ENCODE measurements at regions of chr14 and their contacts with region 1.

Region 1: DNA sequence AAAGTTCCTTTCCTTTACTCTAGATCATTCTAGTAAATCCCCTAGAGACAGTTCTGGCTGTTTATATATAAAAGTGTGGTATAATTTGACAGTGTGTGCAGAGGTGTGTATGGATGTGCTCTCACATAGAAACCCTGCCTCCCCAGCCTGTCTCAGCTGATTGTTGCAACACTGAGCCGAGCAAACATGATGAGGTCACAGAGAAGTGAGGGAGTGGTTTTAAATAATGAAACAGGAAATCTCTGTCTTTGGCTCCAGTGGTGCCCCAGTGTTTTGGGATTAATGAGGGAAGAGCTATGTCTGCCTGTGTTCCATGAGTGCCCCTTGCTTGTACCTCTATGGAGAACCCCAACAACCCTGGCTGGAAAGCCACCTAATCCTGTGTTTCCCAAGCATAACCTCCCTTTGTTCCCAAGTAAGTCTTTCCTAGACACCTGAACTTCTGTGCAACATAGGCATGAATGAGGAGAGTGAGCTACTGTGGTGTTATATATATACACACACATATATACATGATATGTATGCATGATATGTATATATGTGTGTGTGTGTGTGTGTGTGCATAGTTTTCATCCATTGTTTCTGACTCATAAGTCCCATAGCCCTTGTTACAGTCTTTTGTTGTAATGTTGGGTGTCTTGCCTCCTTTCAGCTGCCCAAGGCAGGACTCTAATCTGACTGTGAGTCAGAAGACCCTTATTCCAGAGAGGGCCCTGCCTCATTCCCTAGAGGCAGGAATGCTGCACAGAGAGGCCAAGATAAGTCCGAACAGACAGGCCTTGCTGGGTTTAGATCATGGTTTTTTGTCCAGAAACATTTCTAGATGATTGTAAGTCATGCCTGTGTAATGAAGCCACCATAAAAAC is 18.0 kb downstream of the TRAF3 start:
- DNase-seq: peak in 1 of 5 donors; percentile 39
- H3K4me3 ChIP-seq: no peak overlapping the region
- H3K27ac ChIP-seq: no peak overlapping the region
- H3K4me1 ChIP-seq: peaks cover 3% of the 10 kb centered on the region
- H3K27me3 ChIP-seq: no peaks in the 10 kb centered on the region
- CTCF ChIP-seq: no peak
- EP300 ChIP-seq: no peak
- POLR2A ChIP-seq: no peak

Region 2: GRCh38 chr14:101917413-101918017 is 877.8 kb before region 1 on chr14:
- intact Hi-C with region 1: no loop called
- DNase-seq: no peak
- H3K4me3 ChIP-seq: no peak overlapping the region
- H3K27ac ChIP-seq: no peak overlapping the region
- H3K4me1 ChIP-seq: no peaks in the 10 kb centered on the region
- H3K27me3 ChIP-seq: no peaks in the 10 kb centered on the region
- CTCF ChIP-seq: no peak
- EP300 ChIP-seq: no peak
- POLR2A ChIP-seq: no peak

Region 3: DNA sequence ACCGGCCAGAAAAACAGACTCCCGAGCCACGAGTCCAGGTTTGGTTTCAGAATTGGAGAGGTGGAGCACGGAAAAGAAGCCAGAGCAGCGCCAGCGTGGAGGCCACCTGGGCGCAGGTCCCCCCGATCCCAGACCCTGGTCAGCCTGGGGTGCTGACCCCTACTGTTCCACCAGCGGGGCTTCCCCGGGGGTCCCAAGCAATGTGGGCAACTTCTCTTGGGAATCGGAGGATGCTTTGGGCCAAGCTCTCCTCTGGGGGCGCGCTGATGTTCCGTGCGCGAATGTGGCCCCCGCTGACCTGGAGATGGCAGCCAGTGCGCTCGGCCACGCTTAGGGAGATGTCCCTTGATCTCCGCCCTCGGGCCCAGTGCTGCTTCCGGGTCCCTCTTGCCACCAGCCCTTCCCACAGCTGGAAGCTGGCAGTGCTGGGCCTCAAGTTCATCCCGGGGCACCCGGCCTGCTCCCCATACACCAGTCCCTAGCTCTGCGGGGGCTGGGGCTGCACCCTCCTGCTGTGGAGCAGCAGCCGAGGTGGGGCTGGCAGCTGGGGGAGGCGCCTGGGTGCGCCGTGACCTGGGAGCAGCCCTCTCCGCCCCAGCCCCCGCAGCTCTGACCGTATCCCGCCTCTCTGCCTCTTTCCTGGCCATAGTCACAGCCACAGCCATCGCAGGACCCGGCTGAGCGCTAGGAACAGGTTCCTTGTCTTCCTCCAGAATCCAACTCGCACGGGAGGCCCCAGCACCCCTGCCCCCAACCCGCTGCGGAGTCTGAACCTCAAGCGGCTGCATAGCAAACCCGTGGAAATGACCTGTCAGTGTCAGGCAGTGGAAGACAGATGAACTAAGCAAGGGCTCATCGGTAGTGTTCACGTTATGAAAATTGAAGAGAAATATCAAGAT is 111.6 kb before region 1 on chr14:
- intact Hi-C with region 1: no loop called
- DNase-seq: no peak
- H3K4me3 ChIP-seq: no peak overlapping the region
- H3K27ac ChIP-seq: no peak overlapping the region
- H3K4me1 ChIP-seq: no peaks in the 10 kb centered on the region
- H3K27me3 ChIP-seq: no peaks in the 10 kb centered on the region
- CTCF ChIP-seq: no peak
- EP300 ChIP-seq: no peak
- POLR2A ChIP-seq: no peak

Region 4: DNA sequence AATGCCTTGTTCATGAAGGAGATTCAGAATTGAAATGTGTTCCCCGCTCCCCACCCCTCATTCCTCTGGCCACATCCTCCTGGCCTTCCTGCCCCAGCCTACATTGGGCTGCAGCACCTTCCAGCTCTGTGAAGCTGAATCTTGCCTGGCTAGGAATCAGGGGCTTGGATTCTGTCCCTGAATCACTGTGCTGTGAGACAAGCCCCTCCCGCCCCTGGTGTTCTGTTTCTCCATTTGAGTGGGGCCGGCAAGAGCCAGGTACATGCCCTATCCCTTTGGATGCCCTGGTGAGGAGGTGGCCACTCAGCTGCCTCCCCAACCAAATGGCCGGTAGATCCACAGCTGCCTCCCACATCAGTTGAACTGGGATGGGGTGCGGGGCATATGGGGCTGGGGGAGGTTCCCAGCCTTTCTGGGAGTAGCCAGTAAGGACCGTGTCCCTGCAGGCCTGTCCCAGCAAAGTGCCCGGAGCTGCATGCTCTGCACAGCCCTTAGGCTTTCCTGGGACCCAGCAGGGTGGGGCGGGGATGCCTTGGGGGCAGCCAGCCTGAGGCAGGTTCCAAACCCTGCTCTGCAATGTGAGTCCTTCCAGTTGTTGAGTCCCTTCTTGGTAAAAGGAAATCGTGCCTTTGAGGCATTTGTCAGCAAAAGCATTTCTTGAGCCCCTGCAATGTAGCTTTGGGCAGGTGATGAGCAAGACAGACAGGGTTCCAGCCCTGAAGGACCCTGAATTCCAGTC is 56.4 kb before region 1 on chr14:
- intact Hi-C with region 1: loop called in 1 of 4 experiments (anchors 5 kb)
- DNase-seq: peak in 1 of 5 donors; percentile 4
- H3K4me3 ChIP-seq: no peak overlapping the region
- H3K27ac ChIP-seq: no peak overlapping the region
- H3K4me1 ChIP-seq: no peaks in the 10 kb centered on the region
- H3K27me3 ChIP-seq: no peaks in the 10 kb centered on the region
- CTCF ChIP-seq: no peak
- EP300 ChIP-seq: no peak
- POLR2A ChIP-seq: no peak

Region 5: GRCh38 chr14:102749393-102750305 is 45.6 kb before region 1 on chr14:
- intact Hi-C with region 1: no loop called
- DNase-seq: no peak
- H3K4me3 ChIP-seq: no peak overlapping the region
- H3K27ac ChIP-seq: no peak overlapping the region
- H3K4me1 ChIP-seq: no peaks in the 10 kb centered on the region
- H3K27me3 ChIP-seq: no peaks in the 10 kb centered on the region
- CTCF ChIP-seq: no peak
- EP300 ChIP-seq: no peak
- POLR2A ChIP-seq: no peak